ENCODE measurements at regions of chr4 and their contacts with region 1.

Region 1: DNA sequence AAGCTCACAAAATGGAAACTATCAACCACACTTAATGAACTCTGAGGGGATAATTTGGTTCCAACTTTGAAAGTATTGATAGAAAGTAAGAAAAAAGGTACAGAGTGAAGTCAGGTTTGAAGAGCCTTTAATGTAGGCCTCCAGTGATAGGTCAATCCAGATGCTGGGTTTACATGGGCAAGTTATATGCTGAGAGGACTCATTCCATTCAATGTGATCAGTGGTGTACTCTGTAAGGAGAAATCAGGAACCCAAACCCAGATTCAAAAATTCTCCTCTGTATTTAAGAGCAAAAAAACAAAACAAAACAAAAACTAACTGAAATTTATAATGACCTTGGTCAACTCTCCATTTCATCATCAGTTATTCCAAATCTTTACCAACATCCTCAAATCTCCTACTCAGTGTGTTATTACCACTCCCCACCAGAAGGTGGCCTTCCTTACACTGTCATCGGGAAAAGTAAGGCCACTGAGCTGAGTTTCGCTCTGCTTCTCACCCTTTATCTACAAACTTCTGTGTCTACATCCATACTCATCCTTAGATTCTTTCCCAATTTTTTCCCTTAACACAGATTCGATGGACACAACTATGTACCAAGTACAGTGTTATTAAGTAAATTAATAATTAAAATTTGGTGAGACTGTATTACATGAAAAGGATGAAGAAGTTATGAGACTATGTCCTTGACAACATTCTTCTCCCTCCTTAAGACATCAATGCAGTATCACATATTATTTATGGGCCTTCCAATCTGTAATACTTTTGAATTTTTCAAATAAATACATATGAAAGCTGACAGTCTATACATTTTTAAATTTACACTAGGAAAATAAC is 88.3 kb downstream of the ZAR1 start:
- DNase-seq: peak; percentile 15 to 63 (median 46)
- H3K4me3 ChIP-seq: no peak overlapping the region
- H3K4me3 Mint-ChIP-seq: no peak overlapping the region
- H3K27ac ChIP-seq: no peak overlapping the region
- H3K27ac Mint-ChIP-seq: peak overlapping the region in 5 of 8 donors; percentile 39 to 86 (median 46)
- H3K4me1 ChIP-seq: no peaks in the 10 kb centered on the region
- H3K4me1 Mint-ChIP-seq: peaks cover 3 to 12% (median 4%) of the 10 kb centered on the region in 3 donors
- H3K27me3 ChIP-seq: no peaks in the 10 kb centered on the region
- H3K27me3 Mint-ChIP-seq: no peaks in the 10 kb centered on the region

Region 2: DNA sequence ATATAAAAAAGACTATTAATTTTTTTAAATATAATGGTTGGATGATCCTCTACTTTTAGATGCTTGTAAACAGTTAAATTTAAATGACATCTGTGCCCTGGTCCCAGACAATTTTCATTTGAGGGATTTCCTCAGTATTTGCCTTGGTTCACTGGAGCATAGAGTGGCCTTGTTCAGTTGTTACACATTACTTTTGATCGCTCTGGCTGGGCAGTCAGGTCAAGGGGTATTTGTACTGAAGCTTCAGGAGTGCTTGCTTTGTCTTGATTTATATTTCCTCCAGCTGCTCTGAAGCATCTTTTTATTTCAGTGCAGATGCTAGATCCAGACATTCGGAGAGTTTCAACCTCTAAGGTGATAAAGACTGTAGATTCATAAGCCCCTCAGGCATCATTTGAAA is 1164.8 kb before region 1 on chr4:
- CTCF ChIA-PET with region 1: no interaction called
- POLR2A ChIA-PET with region 1: no interaction called
- DNase-seq: no peak
- H3K4me3 ChIP-seq: no peak overlapping the region
- H3K4me3 Mint-ChIP-seq: no peak overlapping the region
- H3K27ac ChIP-seq: no peak overlapping the region
- H3K27ac Mint-ChIP-seq: no peak overlapping the region
- H3K4me1 ChIP-seq: no peaks in the 10 kb centered on the region
- H3K4me1 Mint-ChIP-seq: no peaks in the 10 kb centered on the region
- H3K27me3 ChIP-seq: no peaks in the 10 kb centered on the region
- H3K27me3 Mint-ChIP-seq: peaks cover 7 to 16% of the 10 kb centered on the region in 2 donors

Region 3: DNA sequence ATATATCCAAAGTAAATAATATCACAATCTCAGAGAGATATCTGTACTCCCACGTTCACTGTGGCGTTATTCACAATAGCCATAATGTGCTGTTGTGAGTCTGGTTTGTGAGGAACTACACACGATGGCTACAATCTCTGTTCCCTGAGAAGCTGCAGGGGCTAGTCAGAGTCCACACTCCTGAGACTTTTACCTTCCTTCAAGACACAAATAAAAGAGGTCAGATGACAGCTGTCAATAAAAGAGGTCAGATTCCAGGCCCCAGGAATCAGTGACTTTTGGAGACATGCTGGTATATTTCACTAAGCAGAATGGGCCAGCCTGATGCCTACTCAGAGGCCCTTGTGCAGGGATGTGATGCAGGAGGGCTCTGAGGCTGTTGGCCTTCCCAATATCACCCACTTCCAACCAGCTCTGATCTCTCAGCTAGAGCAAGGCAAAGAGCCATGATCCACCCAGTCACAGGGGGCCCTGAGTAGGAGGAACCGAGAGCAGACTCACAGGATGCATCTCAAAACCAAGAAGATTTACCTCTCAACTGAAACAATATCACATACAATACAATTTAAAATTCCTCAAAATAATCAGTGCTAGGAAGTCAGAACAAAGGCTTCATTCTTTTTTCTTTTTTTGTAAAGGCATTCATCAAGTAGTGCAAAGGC is 187.9 kb after region 1 on chr4:
- CTCF ChIA-PET with region 1: no interaction called
- POLR2A ChIA-PET with region 1: no interaction called
- DNase-seq: no peak
- H3K4me3 ChIP-seq: no peak overlapping the region
- H3K4me3 Mint-ChIP-seq: peak overlapping the region in 5 of 7 donors; percentile 19 to 59 (median 27)
- H3K27ac ChIP-seq: no peak overlapping the region
- H3K27ac Mint-ChIP-seq: peak overlapping the region in 4 of 8 donors; percentile 8 to 71 (median 64)
- H3K4me1 ChIP-seq: peaks cover 39% of the 10 kb centered on the region
- H3K4me1 Mint-ChIP-seq: peaks cover 52 to 83% (median 73%) of the 10 kb centered on the region in 3 donors
- H3K27me3 ChIP-seq: no peaks in the 10 kb centered on the region
- H3K27me3 Mint-ChIP-seq: no peaks in the 10 kb centered on the region

Region 4: DNA sequence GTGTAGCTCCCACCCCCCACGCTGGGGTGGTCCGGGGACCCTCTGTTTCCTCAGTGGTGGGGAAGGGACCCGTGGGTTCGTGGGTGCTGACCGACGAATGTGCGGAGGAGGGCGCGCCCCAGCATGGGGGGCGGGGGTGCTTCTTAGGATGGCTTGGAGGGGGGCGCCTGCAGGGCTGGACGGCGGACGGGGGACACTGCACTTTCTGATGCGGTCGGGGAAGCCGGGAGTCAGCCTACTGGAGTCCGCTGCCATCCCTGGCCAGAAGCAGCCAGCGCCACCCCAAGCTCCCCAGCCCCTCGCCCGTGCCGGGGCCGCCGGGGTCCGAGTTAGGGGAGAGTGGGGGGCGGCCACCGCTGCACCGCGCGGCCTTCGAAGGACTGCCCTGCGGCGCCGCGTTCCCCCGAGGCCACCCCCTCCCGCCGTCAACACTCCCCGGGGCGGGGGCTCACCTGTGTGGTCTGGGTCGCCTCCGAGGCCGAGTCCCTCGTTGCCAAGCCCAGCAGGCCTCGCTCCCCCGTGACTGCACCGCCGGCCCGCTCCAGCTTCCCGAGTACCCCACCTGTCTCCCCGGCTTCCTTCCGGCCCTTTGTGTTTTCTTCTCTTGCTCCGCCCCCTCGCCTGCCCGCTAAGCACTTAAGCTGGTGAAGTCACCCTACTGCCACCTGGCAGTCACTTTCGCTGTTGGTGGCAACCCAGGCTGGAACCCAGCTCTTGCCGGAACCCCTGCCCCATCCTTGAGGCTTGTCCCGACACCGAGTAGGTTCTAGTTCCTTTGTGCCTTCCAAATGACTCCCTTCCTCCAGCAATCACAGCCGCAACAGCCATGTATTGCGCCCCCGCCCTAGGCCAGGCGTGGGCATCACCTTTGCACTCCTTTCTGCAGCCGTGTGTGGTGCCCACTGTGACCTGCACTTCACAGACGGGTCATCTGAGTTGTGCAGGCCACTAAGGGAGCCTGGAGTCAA is 328.1 kb after region 1 on chr4 and contains the start of gene OCIAD2:
- CTCF ChIA-PET with region 1: interaction called, 20 read pairs
- POLR2A ChIA-PET with region 1: interaction called, 3 read pairs
- DNase-seq: peak; percentile 74 to 91 (median 80)
- H3K4me3 ChIP-seq: peak within 1 kb of the TSS; percentile 75
- H3K4me3 Mint-ChIP-seq: peak within 1 kb of the TSS; percentile 89 to 98 (median 93)
- H3K27ac ChIP-seq: peak within 1 kb of the TSS; percentile 57
- H3K27ac Mint-ChIP-seq: peak within 1 kb of the TSS; percentile 88 to 98 (median 94)
- H3K4me1 ChIP-seq: peaks cover 40% of the 10 kb centered on the region
- H3K4me1 Mint-ChIP-seq: peaks cover 31 to 47% (median 40%) of the 10 kb centered on the region in 3 donors
- H3K27me3 ChIP-seq: no peaks in the 10 kb centered on the region
- H3K27me3 Mint-ChIP-seq: no peaks in the 10 kb centered on the region
- total RNA-seq, gene OCIAD2: 55.7 to 60.0 TPM

Region 5: GRCh38 chr4:48963042-48963679 is 384.8 kb after region 1 on chr4:
- CTCF ChIA-PET with region 1: interaction called, 25 read pairs
- POLR2A ChIA-PET with region 1: no interaction called
- DNase-seq: peak; percentile 54 to 79 (median 68)
- H3K4me3 ChIP-seq: no peak overlapping the region
- H3K4me3 Mint-ChIP-seq: no peak overlapping the region
- H3K27ac ChIP-seq: no peak overlapping the region
- H3K27ac Mint-ChIP-seq: no peak overlapping the region
- H3K4me1 ChIP-seq: no peaks in the 10 kb centered on the region
- H3K4me1 Mint-ChIP-seq: peaks cover 0 to 3% (median 0%) of the 10 kb centered on the region in 3 donors
- H3K27me3 ChIP-seq: no peaks in the 10 kb centered on the region
- H3K27me3 Mint-ChIP-seq: peaks cover 0 to 1% of the 10 kb centered on the region in 2 donors